Activated CD4-positive, alpha-beta T cell treated with anti-CD3 and anti-CD28 coated beads for 36 hours (primary cell): ENCODE measurements at regions of chr3 and their contacts with region 1.

Region 1: DNA sequence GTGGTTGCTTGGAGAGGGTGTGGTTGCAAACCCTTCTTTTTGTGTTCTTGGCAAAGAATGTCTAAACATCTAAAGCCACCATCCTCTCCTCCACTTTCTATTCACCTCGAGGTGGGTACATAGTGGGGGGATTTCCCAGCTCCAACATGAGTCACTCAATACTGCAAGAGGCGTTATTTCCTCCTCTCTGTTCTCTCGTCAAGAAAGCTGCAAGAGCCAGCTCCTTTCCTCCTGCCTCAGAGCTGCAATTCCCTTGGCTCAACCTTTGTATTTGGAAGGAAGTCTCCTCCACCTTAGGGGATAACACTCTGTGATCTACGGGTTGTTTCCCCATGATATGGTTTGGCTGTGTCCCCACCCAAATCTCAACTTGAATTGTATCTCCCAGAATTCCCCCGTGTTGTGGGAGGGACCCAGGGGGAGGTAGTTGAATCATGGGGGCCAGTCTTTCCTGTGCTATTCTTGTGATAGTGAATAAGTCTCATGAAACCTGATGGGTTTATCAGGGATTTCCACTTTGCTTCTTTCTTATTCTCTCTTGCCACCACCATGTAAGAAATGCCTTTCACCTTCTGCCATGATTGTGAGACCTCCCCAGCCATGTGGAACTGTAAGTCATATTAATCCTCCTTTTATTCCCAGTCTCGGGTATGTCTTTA is 138.4 kb downstream of the PLCL2 start:
- DNase-seq: peak; percentile 70
- ATAC-seq: peak; percentile 94
- H3K4me3 Mint-ChIP-seq: peak overlapping the region; percentile 59
- H3K27ac Mint-ChIP-seq: peak overlapping the region; percentile 88
- H3K4me1 Mint-ChIP-seq: peaks cover 71% of the 10 kb centered on the region
- H3K27me3 Mint-ChIP-seq: no peaks in the 10 kb centered on the region

Region 2: DNA sequence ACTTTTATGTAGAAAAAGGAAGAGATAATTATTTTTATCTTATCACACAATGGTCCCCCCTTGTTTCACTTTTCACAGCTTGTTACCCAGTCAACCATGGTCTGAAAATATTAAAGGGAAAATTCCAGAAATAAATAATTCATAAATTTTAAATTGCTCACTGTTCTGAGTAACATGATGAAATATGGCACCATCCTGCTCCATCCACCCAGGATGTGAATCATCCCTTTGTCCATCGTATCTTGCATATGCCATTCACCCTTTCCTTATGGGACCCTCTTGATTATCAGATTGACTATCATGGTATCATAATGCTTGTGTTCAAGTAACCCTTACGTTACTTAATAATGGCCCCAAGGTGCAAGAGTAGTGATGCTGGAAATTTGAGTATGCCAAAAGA is 1269.1 kb before region 1 on chr3:
- CTCF ChIA-PET with region 1: no interaction called
- POLR2A ChIA-PET with region 1: no interaction called
- intact Hi-C with region 1: no loop called
- DNase-seq: no peak
- ATAC-seq: no peak
- H3K4me3 Mint-ChIP-seq: no peak overlapping the region
- H3K27ac Mint-ChIP-seq: peak overlapping the region; percentile 31
- H3K4me1 Mint-ChIP-seq: peaks cover 7% of the 10 kb centered on the region
- H3K27me3 Mint-ChIP-seq: no peaks in the 10 kb centered on the region

Region 3: GRCh38 chr3:16687217-16687616 is 335.9 kb before region 1 on chr3:
- CTCF ChIA-PET with region 1: no interaction called
- POLR2A ChIA-PET with region 1: no interaction called
- intact Hi-C with region 1: no loop called
- DNase-seq: no peak
- ATAC-seq: no peak
- H3K4me3 Mint-ChIP-seq: no peak overlapping the region
- H3K27ac Mint-ChIP-seq: no peak overlapping the region
- H3K4me1 Mint-ChIP-seq: no peaks in the 10 kb centered on the region
- H3K27me3 Mint-ChIP-seq: no peaks in the 10 kb centered on the region

Region 4: DNA sequence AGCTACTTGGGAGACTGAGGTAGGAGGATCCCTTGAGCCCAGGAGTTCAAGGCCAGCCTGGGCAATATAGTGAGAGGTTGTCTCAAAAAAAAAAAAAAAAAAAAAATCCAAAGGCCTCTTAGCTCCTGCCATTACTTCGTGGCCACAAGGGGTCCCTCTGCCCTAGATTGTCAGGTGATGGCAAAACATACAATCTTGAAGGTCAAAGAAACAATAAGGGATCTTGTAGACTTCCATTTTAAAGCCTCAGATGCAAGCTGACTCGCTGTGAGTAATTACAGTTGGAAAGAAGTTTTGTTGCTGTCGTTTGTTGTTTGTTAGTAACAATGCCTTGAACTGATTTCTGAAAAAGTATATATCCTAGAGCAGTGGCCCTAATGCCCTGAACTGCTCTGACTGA is 194.3 kb before region 1 on chr3:
- CTCF ChIA-PET with region 1: no interaction called
- POLR2A ChIA-PET with region 1: interaction called, 3 read pairs
- intact Hi-C with region 1: loop called in 1 of 2 experiments (anchors 5 kb)
- DNase-seq: peak; percentile 73
- ATAC-seq: peak; percentile 51
- H3K4me3 Mint-ChIP-seq: no peak overlapping the region
- H3K27ac Mint-ChIP-seq: no peak overlapping the region
- H3K4me1 Mint-ChIP-seq: peaks cover 16% of the 10 kb centered on the region
- H3K27me3 Mint-ChIP-seq: no peaks in the 10 kb centered on the region

Region 5: GRCh38 chr3:16849229-16849628 is 173.9 kb before region 1 on chr3:
- CTCF ChIA-PET with region 1: interaction called, 4 read pairs
- POLR2A ChIA-PET with region 1: no interaction called
- intact Hi-C with region 1: loop called in 1 of 2 experiments (anchors 10 kb)
- DNase-seq: peak; percentile 78
- ATAC-seq: peak; percentile 69
- H3K4me3 Mint-ChIP-seq: peak overlapping the region; percentile 61
- H3K27ac Mint-ChIP-seq: peak overlapping the region; percentile 80
- H3K4me1 Mint-ChIP-seq: peaks cover 46% of the 10 kb centered on the region
- H3K27me3 Mint-ChIP-seq: no peaks in the 10 kb centered on the region

Region 6: GRCh38 chr3:16912400-16913263 is 110.5 kb before region 1 on chr3:
- CTCF ChIA-PET with region 1: interaction called, 5 read pairs
- POLR2A ChIA-PET with region 1: no interaction called
- intact Hi-C with region 1: loop called in 1 of 2 experiments (anchors 5 kb)
- DNase-seq: no peak
- ATAC-seq: peak; percentile 66
- H3K4me3 Mint-ChIP-seq: no peak overlapping the region
- H3K27ac Mint-ChIP-seq: peak overlapping the region; percentile 55
- H3K4me1 Mint-ChIP-seq: peaks cover 73% of the 10 kb centered on the region
- H3K27me3 Mint-ChIP-seq: no peaks in the 10 kb centered on the region

Region 7: GRCh38 chr3:17233398-17233800 is 210.3 kb after region 1 on chr3:
- CTCF ChIA-PET with region 1: no interaction called
- POLR2A ChIA-PET with region 1: no interaction called
- intact Hi-C with region 1: loop called in 1 of 2 experiments (anchors 5 kb)
- DNase-seq: peak; percentile 47
- ATAC-seq: peak; percentile 91
- H3K4me3 Mint-ChIP-seq: no peak overlapping the region
- H3K27ac Mint-ChIP-seq: no peak overlapping the region
- H3K4me1 Mint-ChIP-seq: peaks cover 24% of the 10 kb centered on the region
- H3K27me3 Mint-ChIP-seq: no peaks in the 10 kb centered on the region

Region 8: GRCh38 chr3:17579289-17580031 is 556.3 kb after region 1 on chr3:
- CTCF ChIA-PET with region 1: no interaction called
- POLR2A ChIA-PET with region 1: no interaction called
- intact Hi-C with region 1: no loop called
- DNase-seq: no peak
- ATAC-seq: peak; percentile 91
- H3K4me3 Mint-ChIP-seq: no peak overlapping the region
- H3K27ac Mint-ChIP-seq: no peak overlapping the region
- H3K4me1 Mint-ChIP-seq: peaks cover 6% of the 10 kb centered on the region
- H3K27me3 Mint-ChIP-seq: no peaks in the 10 kb centered on the region